ENCODE measurements at regions of chr9 and their contacts with region 1.

Region 1: GRCh38 chr9:100322954-100323536 is 29.7 kb downstream of the TEX10 start:
- DNase-seq: peak; percentile 51
- ATAC-seq: peak; percentile 66; the same call in 1 of the 2 replicates
- H3K4me3 ChIP-seq: no peak overlapping the region
- H3K27ac ChIP-seq: no peak overlapping the region
- H3K4me1 ChIP-seq: no peaks in the 10 kb centered on the region
- H3K27me3 ChIP-seq: no peaks in the 10 kb centered on the region
- CTCF ChIP-seq: peak; percentile 76
- POLR2A ChIP-seq: no peak
- RAD21 ChIP-seq: peak; percentile 66

Region 2: GRCh38 chr9:99266255-99267023 is 1056.6 kb before region 1 on chr9:
- CTCF ChIA-PET with region 1: no interaction called
- POLR2A ChIA-PET with region 1: no interaction called
- dilution Hi-C with region 1: no loop called
- in situ Hi-C with region 1: no loop called
- intact Hi-C with region 1: loop called (anchors 10 kb)
- DNase-seq: peak; percentile 68
- ATAC-seq: peak; percentile 81
- H3K4me3 ChIP-seq: no peak overlapping the region
- H3K27ac ChIP-seq: no peak overlapping the region
- H3K4me1 ChIP-seq: peaks cover 2% of the 10 kb centered on the region; the same call in 1 of the 2 replicates
- H3K27me3 ChIP-seq: no peaks in the 10 kb centered on the region
- CTCF ChIP-seq: peak; percentile 84
- POLR2A ChIP-seq: 0 out of 2 replicates have a peak, but pooled peaks have one; percentile 23
- RAD21 ChIP-seq: peak; percentile 96

Region 3: GRCh38 chr9:100028201-100028784 is 294.8 kb before region 1 on chr9:
- CTCF ChIA-PET with region 1: no interaction called
- POLR2A ChIA-PET with region 1: no interaction called
- dilution Hi-C with region 1: no loop called
- in situ Hi-C with region 1: loop called (anchors 10 kb)
- intact Hi-C with region 1: loop called (anchors 5 kb)
- DNase-seq: peak; percentile 76
- ATAC-seq: peak; percentile 99
- H3K4me3 ChIP-seq: no peak overlapping the region
- H3K27ac ChIP-seq: no peak overlapping the region
- H3K4me1 ChIP-seq: no peaks in the 10 kb centered on the region
- H3K27me3 ChIP-seq: no peaks in the 10 kb centered on the region
- CTCF ChIP-seq: peak; percentile 85
- POLR2A ChIP-seq: no peak
- RAD21 ChIP-seq: peak; percentile 92

Region 4: GRCh38 chr9:100222674-100223073 is 100.4 kb before region 1 on chr9:
- CTCF ChIA-PET with region 1: no interaction called
- POLR2A ChIA-PET with region 1: no interaction called
- dilution Hi-C with region 1: no loop called
- in situ Hi-C with region 1: no loop called
- intact Hi-C with region 1: loop called (anchors 5 kb)
- DNase-seq: peak; percentile 53
- ATAC-seq: 0 out of 2 replicates have a peak, but pooled peaks have one; percentile 27
- H3K4me3 ChIP-seq: no peak overlapping the region
- H3K27ac ChIP-seq: no peak overlapping the region
- H3K4me1 ChIP-seq: peaks cover 2% of the 10 kb centered on the region
- H3K27me3 ChIP-seq: no peaks in the 10 kb centered on the region
- CTCF ChIP-seq: peak; percentile 61
- POLR2A ChIP-seq: no peak
- RAD21 ChIP-seq: peak; percentile 64

Measured in IMR-90 (cell line).